SK-N-SH (cell line): ENCODE measurements at regions of chr14 and their contacts with region 1.

Region 1: DNA sequence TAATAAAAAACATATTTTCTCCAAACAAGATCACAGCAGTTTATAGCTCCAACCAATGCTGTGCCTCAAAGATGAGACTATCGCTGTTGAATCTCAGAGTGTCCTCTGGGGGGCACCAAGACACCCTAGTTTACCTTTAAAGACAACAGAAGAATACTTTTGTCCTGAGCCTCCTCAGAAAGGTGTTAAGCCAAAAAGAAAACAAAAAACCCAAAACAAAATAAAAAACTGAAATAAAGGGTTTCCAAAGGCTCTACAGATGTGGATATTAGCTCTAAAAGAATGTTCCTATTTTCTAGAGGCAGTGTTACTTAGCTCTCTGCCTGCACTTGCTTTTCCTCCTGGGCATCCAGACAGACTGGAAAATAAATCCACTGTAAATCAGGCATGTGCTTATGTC is 86.9 kb upstream of the TTC7B start:
- DNase-seq: peak; percentile 69
- H3K4me3 ChIP-seq: no peak overlapping the region
- H3K27ac ChIP-seq: peak overlapping the region in 1 of 2 experiments; percentile 67; a peak in 2 of 4 replicates
- H3K4me1 ChIP-seq: no peaks in the 10 kb centered on the region; a peak in 1 of 4 replicates
- H3K27me3 ChIP-seq: no peaks in the 10 kb centered on the region
- CTCF ChIP-seq: peak; percentile 84
- EP300 ChIP-seq: no peak
- RAD21 ChIP-seq: peak; percentile 93

Region 2: GRCh38 chr14:90703841-90704737 is 199.0 kb before region 1 on chr14:
- CTCF ChIA-PET with region 1: no interaction called
- POLR2A ChIA-PET with region 1: no interaction called
- DNase-seq: no peak
- H3K4me3 ChIP-seq: no peak overlapping the region
- H3K27ac ChIP-seq: no peak overlapping the region
- H3K4me1 ChIP-seq: peaks cover 3 to 7% of the 10 kb centered on the region in 2 experiments; a peak in 3 of 4 replicates
- H3K27me3 ChIP-seq: no peaks in the 10 kb centered on the region
- CTCF ChIP-seq: no peak
- EP300 ChIP-seq: no peak
- RAD21 ChIP-seq: no peak

Region 3: GRCh38 chr14:90924621-90925345 is 21.7 kb after region 1 on chr14:
- CTCF ChIA-PET with region 1: interaction called, 21 read pairs
- POLR2A ChIA-PET with region 1: no interaction called
- DNase-seq: no peak
- H3K4me3 ChIP-seq: no peak overlapping the region
- H3K27ac ChIP-seq: no peak overlapping the region
- H3K4me1 ChIP-seq: peaks cover 0 to 4% of the 10 kb centered on the region in 2 experiments; a peak in 1 of 4 replicates
- H3K27me3 ChIP-seq: no peaks in the 10 kb centered on the region
- CTCF ChIP-seq: no peak
- EP300 ChIP-seq: no peak
- RAD21 ChIP-seq: no peak

Region 4: GRCh38 chr14:90959344-90959743 is 56.2 kb after region 1 on chr14:
- CTCF ChIA-PET with region 1: no interaction called
- POLR2A ChIA-PET with region 1: no interaction called
- DNase-seq: no peak
- H3K4me3 ChIP-seq: no peak overlapping the region
- H3K27ac ChIP-seq: no peak overlapping the region
- H3K4me1 ChIP-seq: no peaks in the 10 kb centered on the region
- H3K27me3 ChIP-seq: no peaks in the 10 kb centered on the region
- CTCF ChIP-seq: no peak
- EP300 ChIP-seq: no peak
- RAD21 ChIP-seq: no peak

Region 5: DNA sequence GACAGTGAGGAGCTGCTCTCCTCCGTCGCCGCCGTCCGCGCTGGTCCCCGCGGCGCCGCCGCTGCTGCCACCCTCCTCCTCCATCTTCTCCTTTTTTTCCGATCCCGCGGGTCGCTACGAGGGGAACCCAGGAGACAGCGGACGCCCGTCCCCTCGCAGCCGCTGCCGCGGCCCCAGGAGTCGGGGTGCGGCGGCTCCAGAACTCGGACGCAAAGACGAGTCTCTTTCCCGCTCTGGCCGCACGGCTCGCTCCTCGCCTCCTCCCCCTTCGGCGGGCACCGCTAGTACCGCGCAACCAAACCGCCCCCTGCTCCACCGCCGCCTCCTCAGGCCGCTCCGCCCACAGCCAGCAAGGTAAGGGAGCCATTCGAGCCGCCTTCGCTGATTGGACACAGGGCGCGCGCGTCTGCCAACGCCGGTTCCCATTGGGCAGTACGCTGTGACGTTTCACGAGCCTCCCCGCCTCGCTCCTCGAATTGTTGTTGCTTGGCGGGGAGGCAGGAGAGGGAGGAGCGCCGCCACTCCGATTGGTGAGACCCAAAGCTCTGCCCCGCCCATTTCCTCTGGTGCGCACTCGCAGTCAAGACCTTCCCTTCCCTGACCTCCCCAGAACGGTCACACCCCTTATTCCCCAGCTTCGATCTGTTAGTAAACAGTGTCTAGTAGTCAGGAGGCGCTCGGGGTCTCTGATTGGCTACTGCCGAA is 157.4 kb after region 1 on chr14 and contains the start of gene RPS6KA5:
- CTCF ChIA-PET with region 1: interaction called, 53 read pairs
- POLR2A ChIA-PET with region 1: interaction called, 4 read pairs
- DNase-seq: peak; percentile 92
- H3K4me3 ChIP-seq: peak within 1 kb of the TSS; percentile 68 to 93
- H3K27ac ChIP-seq: peak within 1 kb of the TSS; percentile 88 to 97
- H3K4me1 ChIP-seq: peaks cover 0 to 7% of the 10 kb centered on the region in 2 experiments; a peak in 3 of 4 replicates
- H3K27me3 ChIP-seq: no peaks in the 10 kb centered on the region
- CTCF ChIP-seq: no peak
- EP300 ChIP-seq: peak in 1 of 2 experiments; percentile 56; a peak in 1 of 4 replicates
- RAD21 ChIP-seq: peak; percentile 30; the same call in 1 of the 2 replicates
- polyA plus RNA-seq, gene RPS6KA5: 0.67 and 0.78 TPM in 2 replicates

Region 6: GRCh38 chr14:91138511-91139359 is 235.6 kb after region 1 on chr14:
- CTCF ChIA-PET with region 1: interaction called, 17 read pairs
- POLR2A ChIA-PET with region 1: no interaction called
- DNase-seq: no peak
- H3K4me3 ChIP-seq: no peak overlapping the region
- H3K27ac ChIP-seq: no peak overlapping the region
- H3K4me1 ChIP-seq: peaks cover 0 to 5% of the 10 kb centered on the region in 2 experiments; a peak in 2 of 4 replicates
- H3K27me3 ChIP-seq: no peaks in the 10 kb centered on the region
- CTCF ChIP-seq: peak; percentile 55
- EP300 ChIP-seq: no peak
- RAD21 ChIP-seq: peak; percentile 40; the same call in 1 of the 2 replicates